Pancreas (tissue), 10 donors: ENCODE measurements at regions of chr19 and their contacts with region 1.

Region 1: GRCh38 chr19:10644260-10645007 is 9.7 kb upstream of the ILF3 start:
- DNase-seq: peak; percentile 79 to 94 (median 86)
- ATAC-seq: peak; percentile 89 to 96 (median 92)
- H3K4me3 ChIP-seq: no peak overlapping the region
- H3K27ac ChIP-seq: peak overlapping the region; percentile 36 to 64 (median 58)
- H3K4me1 ChIP-seq: peaks cover 0 to 7% (median 3%) of the 10 kb centered on the region in 3 donors
- H3K27me3 ChIP-seq: no peaks in the 10 kb centered on the region
- CTCF ChIP-seq: peak; percentile 57 to 82 (median 77)

Region 2: GRCh38 chr19:10499551-10500246 is 144.7 kb before region 1 on chr19:
- intact Hi-C with region 1: loop called in 1 of 3 experiments (anchors 10 kb)
- DNase-seq: peak in 1 of 6 donors; percentile 73
- ATAC-seq: no peak
- H3K4me3 ChIP-seq: no peak overlapping the region
- H3K27ac ChIP-seq: peak overlapping the region in 1 of 4 donors; percentile 7
- H3K4me1 ChIP-seq: peaks cover 0 to 5% (median 5%) of the 10 kb centered on the region in 3 donors
- H3K27me3 ChIP-seq: no peaks in the 10 kb centered on the region
- CTCF ChIP-seq: no peak

Region 3: GRCh38 chr19:10551698-10552301 is 92.6 kb before region 1 on chr19:
- intact Hi-C with region 1: no loop called
- DNase-seq: peak in 3 of 6 donors; percentile 50 to 66 (median 52)
- ATAC-seq: peak in 3 of 4 donors; percentile 36 to 72 (median 62)
- H3K4me3 ChIP-seq: no peak overlapping the region
- H3K27ac ChIP-seq: no peak overlapping the region
- H3K4me1 ChIP-seq: no peaks in the 10 kb centered on the region
- H3K27me3 ChIP-seq: no peaks in the 10 kb centered on the region
- CTCF ChIP-seq: no peak

Region 4: GRCh38 chr19:10575011-10575716 is 69.3 kb before region 1 on chr19:
- intact Hi-C with region 1: loop called in 2 of 3 experiments (anchors 5 to 10 kb)
- DNase-seq: no peak
- ATAC-seq: no peak
- H3K4me3 ChIP-seq: no peak overlapping the region
- H3K27ac ChIP-seq: no peak overlapping the region
- H3K4me1 ChIP-seq: no peaks in the 10 kb centered on the region
- H3K27me3 ChIP-seq: no peaks in the 10 kb centered on the region
- CTCF ChIP-seq: no peak

Region 5: DNA sequence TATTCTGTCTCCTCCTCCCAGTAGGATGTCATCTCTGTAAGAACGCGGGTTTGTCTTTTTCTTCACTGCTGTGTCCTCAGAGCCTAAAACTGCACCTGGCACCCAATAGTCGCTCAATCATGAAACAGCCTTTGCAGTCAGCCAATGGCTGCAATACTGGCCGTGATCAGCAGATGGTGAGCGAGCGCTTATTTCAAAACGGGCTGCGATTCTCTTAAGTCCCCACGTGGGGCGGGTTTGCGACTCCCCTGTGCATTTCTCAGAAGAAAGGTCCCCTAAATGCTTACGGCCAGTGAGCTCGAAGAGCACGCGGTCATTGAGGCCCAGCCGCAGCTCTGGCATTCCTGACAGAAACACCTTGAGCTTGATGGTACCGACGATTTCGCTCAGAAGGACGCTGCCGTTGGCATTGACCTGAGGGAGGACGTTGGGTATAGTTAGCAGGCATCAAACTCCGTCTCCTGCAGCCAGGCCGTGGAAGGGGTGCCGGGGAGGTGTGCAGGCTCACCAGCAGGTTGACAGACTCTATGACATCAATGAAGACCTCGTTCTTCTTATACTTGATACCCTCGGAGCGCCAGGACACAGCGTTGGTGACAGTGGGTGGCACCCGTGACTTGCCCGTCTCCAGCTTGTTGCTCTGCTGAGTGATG is 63.3 kb before region 1 on chr19:
- intact Hi-C with region 1: loop called (anchors 2 to 10 kb)
- DNase-seq: peak; percentile 74 to 92 (median 88)
- ATAC-seq: peak; percentile 88 to 98 (median 97)
- H3K4me3 ChIP-seq: no peak overlapping the region
- H3K27ac ChIP-seq: no peak overlapping the region
- H3K4me1 ChIP-seq: no peaks in the 10 kb centered on the region
- H3K27me3 ChIP-seq: no peaks in the 10 kb centered on the region
- CTCF ChIP-seq: peak; percentile 80 to 96 (median 93)